HEK293 (cell line): ENCODE measurements at regions of chr17 and their contacts with region 1.

Region 1: DNA sequence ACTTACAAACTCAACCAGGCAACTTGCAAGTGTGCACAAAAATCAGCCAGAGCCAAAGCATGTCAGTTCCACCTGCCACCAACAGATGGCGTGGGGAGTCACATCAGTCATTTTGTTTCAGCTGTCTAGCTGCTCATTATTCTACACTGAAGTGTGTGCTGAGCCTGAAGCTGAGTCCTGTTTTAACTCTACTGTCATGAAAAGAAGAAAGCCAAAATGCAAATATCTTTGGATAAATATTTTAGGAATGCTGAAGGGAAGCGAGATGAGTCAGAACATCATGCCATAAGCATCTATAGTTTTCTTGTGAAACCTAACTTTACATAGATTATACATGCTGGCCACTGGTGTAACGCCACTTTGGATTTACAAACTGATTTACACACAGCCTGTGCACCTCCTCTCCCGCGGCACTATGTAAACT is 172.6 kb downstream of the CDK5R1 start:
- H3K4me3 ChIP-seq: no peak overlapping the region
- H3K27ac ChIP-seq: no peak overlapping the region
- H3K4me1 ChIP-seq: no peaks in the 10 kb centered on the region
- CTCF ChIP-seq: peak; percentile 15; the same call in 1 of the 2 replicates

Region 2: GRCh38 chr17:32486111-32486700 is 173.2 kb before region 1 on chr17:
- CTCF ChIA-PET with region 1: interaction called, 13 read pairs
- POLR2A ChIA-PET with region 1: no interaction called
- H3K4me3 ChIP-seq: peak overlapping the region; percentile 57
- H3K27ac ChIP-seq: peak overlapping the region; percentile 80; the same call in 1 of the 2 replicates
- H3K4me1 ChIP-seq: peaks cover 31% of the 10 kb centered on the region
- CTCF ChIP-seq: no peak

Region 3: DNA sequence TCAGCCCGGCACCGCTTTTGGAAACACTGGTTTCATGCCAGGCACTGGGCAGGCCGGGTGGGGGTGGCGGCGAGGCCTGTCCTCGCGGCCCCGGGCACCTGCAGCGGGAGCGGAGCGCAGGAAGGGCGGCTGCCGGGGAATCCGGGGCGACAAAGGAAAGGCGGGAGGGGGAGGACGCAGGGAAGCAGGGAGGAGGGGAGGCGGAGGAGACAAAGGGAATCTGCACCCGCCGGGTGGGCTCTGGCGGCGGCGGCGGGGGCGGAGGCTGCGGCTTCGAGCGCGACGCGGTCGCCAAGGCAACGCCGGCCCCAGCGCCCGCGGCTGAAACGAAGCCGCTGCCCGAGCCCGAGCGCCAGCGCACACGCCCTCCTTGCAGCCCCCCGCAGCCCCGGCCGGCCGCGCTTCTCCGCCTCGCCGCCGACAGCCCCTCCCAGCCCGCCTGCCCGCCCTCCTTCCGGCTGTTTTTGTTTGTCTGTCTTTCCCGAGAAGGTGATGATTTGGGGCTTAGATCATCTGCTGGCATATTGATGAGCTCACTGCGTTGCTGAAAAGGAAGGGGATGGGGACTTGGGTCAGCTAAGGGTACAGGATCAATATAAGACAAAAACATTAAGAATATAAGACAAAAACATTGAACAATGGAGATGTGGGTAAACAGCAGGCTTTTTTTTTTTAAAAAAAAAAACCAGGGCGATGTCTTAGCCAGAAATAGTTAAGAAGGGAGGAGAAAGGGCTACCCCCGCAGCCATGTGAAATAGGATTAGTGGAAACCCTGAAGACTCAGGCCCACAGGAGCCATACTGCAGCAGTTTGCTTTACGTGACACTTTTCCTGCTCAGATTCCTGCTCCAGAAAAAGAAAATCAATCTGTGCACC is 140.0 kb before region 1 on chr17:
- CTCF ChIA-PET with region 1: no interaction called
- POLR2A ChIA-PET with region 1: no interaction called
- H3K4me3 ChIP-seq: peak overlapping the region; percentile 35
- H3K27ac ChIP-seq: peak overlapping the region; percentile 7; the same call in 1 of the 2 replicates
- H3K4me1 ChIP-seq: peaks cover 21% of the 10 kb centered on the region
- CTCF ChIP-seq: no peak

Region 4: GRCh38 chr17:32588982-32589381 is 70.4 kb before region 1 on chr17:
- CTCF ChIA-PET with region 1: interaction called, 13 read pairs
- POLR2A ChIA-PET with region 1: no interaction called
- H3K4me3 ChIP-seq: no peak overlapping the region
- H3K27ac ChIP-seq: no peak overlapping the region
- H3K4me1 ChIP-seq: no peaks in the 10 kb centered on the region
- CTCF ChIP-seq: no peak

Region 5: DNA sequence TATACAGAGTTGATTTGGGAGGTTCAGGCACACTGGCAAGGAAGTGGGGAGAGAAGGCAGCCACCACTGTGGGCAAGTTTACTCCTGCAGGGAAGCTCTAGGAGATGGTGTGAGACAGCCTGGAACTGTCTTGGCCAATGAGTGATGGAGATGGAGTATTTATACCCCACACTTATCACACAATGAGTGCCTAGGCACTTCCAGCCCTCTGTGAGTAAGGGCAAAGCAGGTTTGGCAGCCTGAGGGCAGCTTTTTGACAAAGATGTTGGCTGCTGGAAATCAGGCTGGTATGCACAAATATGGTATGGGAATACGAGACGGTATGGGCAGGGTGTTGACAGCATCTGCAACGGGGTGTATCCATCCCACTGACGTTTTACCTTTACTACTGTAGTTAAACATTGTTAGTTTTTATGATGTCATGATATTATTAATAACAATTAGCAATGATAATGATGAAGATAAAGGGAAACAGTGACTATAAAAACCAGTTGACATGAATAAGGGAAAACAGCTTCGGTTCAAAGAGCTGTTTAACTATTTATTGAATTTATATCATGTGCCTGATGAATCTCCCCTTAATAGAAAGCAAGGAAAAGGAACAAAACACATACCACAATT is 22.7 kb before region 1 on chr17:
- CTCF ChIA-PET with region 1: interaction called, 10 read pairs
- POLR2A ChIA-PET with region 1: no interaction called
- H3K4me3 ChIP-seq: no peak overlapping the region
- H3K27ac ChIP-seq: no peak overlapping the region
- H3K4me1 ChIP-seq: no peaks in the 10 kb centered on the region
- CTCF ChIP-seq: no peak

Region 6: GRCh38 chr17:32648450-32648849 is 11.0 kb before region 1 on chr17:
- CTCF ChIA-PET with region 1: interaction called, 22 read pairs
- POLR2A ChIA-PET with region 1: no interaction called
- H3K4me3 ChIP-seq: no peak overlapping the region
- H3K27ac ChIP-seq: no peak overlapping the region
- H3K4me1 ChIP-seq: no peaks in the 10 kb centered on the region
- CTCF ChIP-seq: no peak

Region 7: GRCh38 chr17:32671896-32672295 is 12.5 kb after region 1 on chr17:
- CTCF ChIA-PET with region 1: interaction called, 23 read pairs
- POLR2A ChIA-PET with region 1: interaction called, 4 read pairs
- H3K4me3 ChIP-seq: no peak overlapping the region
- H3K27ac ChIP-seq: no peak overlapping the region
- H3K4me1 ChIP-seq: no peaks in the 10 kb centered on the region
- CTCF ChIP-seq: no peak

Region 8: GRCh38 chr17:32755045-32755805 is 95.8 kb after region 1 on chr17:
- CTCF ChIA-PET with region 1: interaction called, 30 read pairs
- POLR2A ChIA-PET with region 1: no interaction called
- H3K4me3 ChIP-seq: no peak overlapping the region
- H3K27ac ChIP-seq: no peak overlapping the region
- H3K4me1 ChIP-seq: no peaks in the 10 kb centered on the region
- CTCF ChIP-seq: peak; percentile 26; the same call in 1 of the 2 replicates